Uterus (tissue), 4 donors: ENCODE measurements at regions of chr4 and their contacts with region 1.

Region 1: DNA sequence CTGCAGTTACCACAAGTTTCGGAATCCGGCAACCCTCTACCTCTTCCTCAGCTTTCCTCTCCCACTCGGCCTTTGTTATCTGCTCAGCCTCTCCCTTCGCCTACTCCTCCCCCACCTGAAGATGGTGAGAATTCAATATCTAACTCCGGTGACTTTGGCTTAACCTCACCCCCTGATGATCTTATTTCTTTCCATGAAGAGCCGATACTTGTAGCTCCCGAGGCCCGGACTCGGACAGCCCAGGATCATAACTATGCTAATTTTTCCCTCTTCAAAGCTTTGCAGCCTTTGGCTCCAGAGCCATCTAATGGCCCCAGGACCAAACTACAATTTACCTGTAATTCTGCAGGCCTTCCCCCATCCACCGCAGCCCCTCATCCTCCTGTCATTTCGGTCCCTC is 32.0 kb upstream of the MGST2 start:
- DNase-seq: peak; percentile 33 to 51
- H3K4me3 ChIP-seq: peak overlapping the region; percentile 10 to 24
- H3K27ac ChIP-seq: no peak overlapping the region
- H3K4me1 ChIP-seq: no peaks in the 10 kb centered on the region
- H3K27me3 ChIP-seq: no peaks in the 10 kb centered on the region
- CTCF ChIP-seq: peak; percentile 49 to 68 (median 58)
- POLR2A ChIP-seq: no peak

Region 2: GRCh38 chr4:139030614-139031235 is 602.9 kb before region 1 on chr4:
- intact Hi-C with region 1: no loop called
- DNase-seq: peak; percentile 70 to 80
- H3K4me3 ChIP-seq: no peak overlapping the region
- H3K27ac ChIP-seq: no peak overlapping the region
- H3K4me1 ChIP-seq: no peaks in the 10 kb centered on the region
- H3K27me3 ChIP-seq: no peaks in the 10 kb centered on the region
- CTCF ChIP-seq: peak; percentile 75 to 93 (median 82)
- POLR2A ChIP-seq: no peak

Region 3: DNA sequence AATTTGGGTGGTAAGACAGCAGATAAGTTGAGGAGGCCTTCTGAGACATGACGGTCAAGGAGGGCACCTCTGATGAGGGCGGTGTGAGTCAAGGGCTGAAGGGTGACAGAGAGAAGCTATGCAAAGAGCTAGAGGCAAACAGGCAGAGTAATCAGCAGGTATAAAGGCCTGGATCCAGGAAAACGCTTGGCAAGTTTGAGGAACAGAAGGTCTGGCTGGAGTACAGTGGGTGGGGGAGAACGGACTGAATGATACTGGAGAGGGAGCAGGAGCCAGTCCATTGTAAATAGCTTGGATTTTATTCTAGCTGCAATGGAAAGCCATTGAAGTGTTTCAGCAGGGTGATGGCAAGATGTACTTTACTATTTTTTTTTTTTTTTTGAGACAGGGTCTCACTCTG is 140.5 kb before region 1 on chr4:
- intact Hi-C with region 1: loop called (anchors 10 kb)
- DNase-seq: no peak
- H3K4me3 ChIP-seq: no peak overlapping the region
- H3K27ac ChIP-seq: no peak overlapping the region
- H3K4me1 ChIP-seq: no peaks in the 10 kb centered on the region
- H3K27me3 ChIP-seq: no peaks in the 10 kb centered on the region
- CTCF ChIP-seq: no peak
- POLR2A ChIP-seq: no peak

Region 4: DNA sequence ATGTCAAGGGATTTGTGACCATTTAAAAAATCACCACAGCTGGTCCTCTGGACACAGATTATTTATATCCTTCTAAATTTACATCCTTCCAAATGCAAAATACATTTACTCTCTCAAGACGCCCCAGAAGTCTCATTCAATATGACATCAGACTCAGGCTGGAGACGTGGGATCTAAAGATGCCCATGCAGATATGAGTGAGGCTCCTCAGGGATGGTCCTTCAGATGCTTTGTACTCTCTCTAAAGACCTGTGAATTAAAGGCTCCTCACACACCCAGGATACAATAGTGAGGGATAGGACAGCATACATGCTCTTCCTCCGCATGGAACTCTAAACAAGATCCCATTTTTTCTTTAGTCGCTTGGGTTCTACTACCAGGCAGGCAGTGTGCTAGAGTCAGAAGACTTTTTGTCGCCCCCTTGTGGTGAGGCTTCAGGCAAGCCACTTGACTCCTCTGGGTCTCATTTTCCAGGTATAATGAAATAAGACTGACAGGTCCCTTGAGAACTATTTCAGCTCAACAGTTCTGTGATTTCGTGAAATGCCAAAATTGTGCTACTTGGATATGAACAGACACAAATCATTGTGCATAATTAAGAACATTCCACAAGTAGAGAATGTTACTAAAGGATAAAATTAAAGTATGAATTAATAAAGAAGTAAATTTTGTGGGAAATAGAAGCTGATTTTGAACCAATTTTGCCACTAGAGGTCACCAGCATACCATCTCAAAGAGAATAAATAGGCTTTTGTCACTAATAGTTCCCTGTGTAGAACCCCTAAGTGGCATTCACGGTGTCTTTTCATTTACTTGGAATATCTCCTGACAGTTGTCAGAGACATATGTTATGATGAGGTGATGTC is 726.1 kb after region 1 on chr4:
- intact Hi-C with region 1: no loop called
- DNase-seq: peak; percentile 64 to 80
- H3K4me3 ChIP-seq: no peak overlapping the region
- H3K27ac ChIP-seq: no peak overlapping the region
- H3K4me1 ChIP-seq: no peaks in the 10 kb centered on the region
- H3K27me3 ChIP-seq: no peaks in the 10 kb centered on the region
- CTCF ChIP-seq: peak; percentile 38 to 73 (median 56)
- POLR2A ChIP-seq: no peak